MCF 10A (cell line): ENCODE measurements at regions of chr22 and their contacts with region 1.

Region 1: DNA sequence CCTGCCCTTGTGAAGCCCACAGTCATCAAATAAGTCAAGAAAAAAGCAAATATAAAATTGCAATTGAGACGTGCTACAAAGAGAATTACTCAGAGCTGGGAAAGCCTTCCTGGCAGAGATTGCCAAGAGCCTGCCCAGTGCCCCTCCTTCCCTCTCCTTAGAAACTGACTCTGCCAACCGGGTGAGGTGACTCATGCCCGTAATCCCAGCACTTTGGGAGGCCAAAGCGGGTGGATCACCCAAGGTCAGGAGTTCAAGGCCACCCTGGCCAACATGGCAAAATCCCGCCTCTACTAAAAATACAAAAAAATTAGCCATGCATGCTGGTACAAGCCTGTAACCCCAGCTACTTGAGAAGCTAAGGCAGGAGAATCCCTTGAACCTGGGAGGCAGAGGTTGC is 76.0 kb upstream of the RTL6 start:
- DNase-seq: peak; percentile 96
- H3K4me3 Mint-ChIP-seq: no peak overlapping the region
- H3K27ac Mint-ChIP-seq: no peak overlapping the region
- H3K4me1 Mint-ChIP-seq: peaks cover 9% of the 10 kb centered on the region
- H3K27me3 Mint-ChIP-seq: peaks cover 38% of the 10 kb centered on the region
- CTCF ChIP-seq: no peak

Region 2: GRCh38 chr22:44329179-44329796 is 244.8 kb before region 1 on chr22:
- CTCF ChIA-PET with region 1: no interaction called
- POLR2A ChIA-PET with region 1: no interaction called
- intact Hi-C with region 1: loop called (anchors 5 kb)
- DNase-seq: no peak
- H3K4me3 Mint-ChIP-seq: no peak overlapping the region
- H3K27ac Mint-ChIP-seq: no peak overlapping the region
- H3K4me1 Mint-ChIP-seq: peaks cover 22% of the 10 kb centered on the region
- H3K27me3 Mint-ChIP-seq: peaks cover 13% of the 10 kb centered on the region
- CTCF ChIP-seq: no peak

Region 3: DNA sequence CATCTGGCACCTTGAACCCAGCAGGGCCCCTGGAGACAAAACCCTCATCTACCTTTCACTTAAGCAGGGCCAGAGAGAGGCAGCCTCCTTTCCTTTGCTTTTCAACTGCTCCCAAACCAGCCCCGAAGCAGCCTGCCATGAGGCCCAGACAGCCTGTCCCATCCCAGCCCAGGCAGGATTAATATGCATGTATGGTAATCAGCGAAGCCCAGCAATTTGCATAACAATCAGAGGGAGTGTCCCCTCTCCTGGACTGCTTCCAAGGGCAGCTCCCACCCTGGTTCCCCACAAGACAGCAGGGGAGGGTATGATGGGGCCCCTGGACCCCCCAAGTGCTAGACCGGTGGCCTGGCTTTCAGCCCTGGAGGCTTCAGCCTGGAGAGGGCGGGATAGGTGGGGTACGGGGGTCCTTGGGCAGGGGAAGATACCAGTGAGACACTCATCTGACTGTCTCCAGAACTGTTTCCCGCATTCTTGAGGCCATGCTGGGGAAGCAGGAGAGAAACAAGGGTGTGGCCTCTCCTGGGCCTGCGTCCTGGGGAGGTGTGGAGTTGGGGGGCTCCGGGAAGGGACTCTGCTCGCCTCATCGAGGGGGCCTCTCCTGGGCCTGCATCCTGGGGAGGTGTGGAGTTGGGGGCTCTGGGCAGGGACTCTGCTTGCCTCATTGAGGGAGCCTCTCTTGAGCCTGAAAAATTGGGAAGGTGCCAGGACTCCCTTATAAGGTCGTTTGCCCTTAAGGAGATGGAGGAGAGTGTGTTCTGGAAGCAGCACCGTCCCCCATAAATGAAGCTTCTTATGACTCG is 34.7 kb after region 1 on chr22:
- CTCF ChIA-PET with region 1: no interaction called
- POLR2A ChIA-PET with region 1: no interaction called
- intact Hi-C with region 1: no loop called
- DNase-seq: no peak
- H3K4me3 Mint-ChIP-seq: no peak overlapping the region
- H3K27ac Mint-ChIP-seq: no peak overlapping the region
- H3K4me1 Mint-ChIP-seq: no peaks in the 10 kb centered on the region
- H3K27me3 Mint-ChIP-seq: peaks cover 45% of the 10 kb centered on the region
- CTCF ChIP-seq: no peak